ENCODE measurements at regions of chr11 and their contacts with region 1.

Region 1: DNA sequence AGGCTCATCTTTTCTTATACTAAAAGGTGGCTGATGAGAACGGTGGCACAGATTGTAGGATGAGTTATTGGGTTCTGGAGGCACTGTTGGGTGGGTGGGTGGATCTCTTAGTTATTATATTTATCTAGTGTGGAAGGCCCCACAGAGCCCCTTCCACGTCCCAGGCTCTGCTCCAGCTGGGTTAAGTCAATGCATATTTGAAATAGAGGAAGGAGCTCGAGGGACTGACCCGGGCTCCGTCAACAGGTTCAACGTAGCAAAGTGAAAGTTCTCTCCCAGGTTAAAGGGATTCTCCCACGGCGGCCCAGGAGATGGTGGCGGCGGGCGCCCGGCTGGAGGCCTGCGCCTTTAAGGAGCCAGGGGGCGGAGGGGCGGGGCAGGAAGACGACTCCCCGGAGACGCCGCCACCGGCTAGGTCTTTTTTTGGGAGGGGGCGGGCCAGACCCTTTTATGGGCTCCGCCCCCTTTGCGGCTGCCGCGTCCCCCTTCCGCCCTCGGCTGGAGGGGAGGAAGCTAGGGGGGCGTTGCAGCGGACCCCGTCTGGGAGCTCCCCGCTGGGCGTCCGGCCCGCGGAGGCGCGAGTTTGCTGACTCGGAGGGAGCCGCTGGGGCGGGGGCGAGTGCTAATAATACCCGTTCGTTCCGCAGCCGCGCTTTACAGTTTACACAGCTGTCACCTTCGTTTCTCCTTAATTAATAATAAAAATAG is 1.5 kb upstream of the INPPL1 start:
- DNase-seq: peak; percentile 96
- ATAC-seq: peak; percentile 78
- H3K4me3 ChIP-seq: peak overlapping the region; percentile 97
- H3K27ac ChIP-seq: peak overlapping the region; percentile 34
- H3K4me1 ChIP-seq: peaks cover 14% of the 10 kb centered on the region
- H3K27me3 ChIP-seq: peaks cover 7% of the 10 kb centered on the region; the same call in 1 of the 2 replicates
- CTCF ChIP-seq: no peak

Region 2: GRCh38 chr11:72209101-72209500 is 14.0 kb before region 1 on chr11:
- CTCF ChIA-PET with region 1: interaction called, 11 read pairs
- POLR2A ChIA-PET with region 1: no interaction called
- intact Hi-C with region 1: no loop called
- DNase-seq: no peak
- ATAC-seq: no peak
- H3K4me3 ChIP-seq: no peak overlapping the region
- H3K27ac ChIP-seq: no peak overlapping the region
- H3K4me1 ChIP-seq: no peaks in the 10 kb centered on the region
- H3K27me3 ChIP-seq: peaks cover 7% of the 10 kb centered on the region; the same call in 1 of the 2 replicates
- CTCF ChIP-seq: no peak

Region 3: DNA sequence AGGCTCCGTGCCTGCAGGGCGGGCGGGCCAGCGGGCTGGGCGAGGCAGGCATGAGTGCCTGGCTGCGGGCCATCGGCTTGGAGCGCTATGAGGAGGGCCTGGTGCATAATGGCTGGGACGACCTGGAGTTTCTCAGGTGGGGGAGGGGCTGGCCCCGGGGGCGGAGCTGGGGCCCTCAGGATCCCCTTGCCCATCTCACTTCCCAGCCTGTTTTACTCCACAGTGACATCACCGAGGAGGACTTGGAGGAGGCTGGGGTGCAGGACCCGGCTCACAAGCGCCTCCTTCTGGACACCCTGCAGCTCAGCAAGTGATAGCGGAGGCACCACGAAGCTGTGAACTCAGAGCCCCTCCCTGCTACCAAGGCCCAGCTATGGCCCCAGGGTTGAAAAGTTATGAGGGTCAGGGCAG is 15.0 kb after region 1 on chr11:
- CTCF ChIA-PET with region 1: no interaction called
- POLR2A ChIA-PET with region 1: interaction called, 7 read pairs
- intact Hi-C with region 1: loop called (anchors 2 kb)
- DNase-seq: peak; percentile 56
- ATAC-seq: peak; percentile 15
- H3K4me3 ChIP-seq: no peak overlapping the region
- H3K27ac ChIP-seq: no peak overlapping the region
- H3K4me1 ChIP-seq: peaks cover 9% of the 10 kb centered on the region
- H3K27me3 ChIP-seq: peaks cover 5% of the 10 kb centered on the region; the same call in 1 of the 2 replicates
- CTCF ChIP-seq: peak; percentile 81

Region 4: GRCh38 chr11:72314600-72315392 is 91.7 kb after region 1 on chr11:
- CTCF ChIA-PET with region 1: no interaction called
- POLR2A ChIA-PET with region 1: no interaction called
- intact Hi-C with region 1: no loop called
- DNase-seq: no peak
- ATAC-seq: no peak
- H3K4me3 ChIP-seq: no peak overlapping the region
- H3K27ac ChIP-seq: no peak overlapping the region
- H3K4me1 ChIP-seq: no peaks in the 10 kb centered on the region
- H3K27me3 ChIP-seq: no peaks in the 10 kb centered on the region
- CTCF ChIP-seq: no peak

Measured in PC-3 (cell line).